A549 (cell line): ENCODE measurements at regions of chr10 and their contacts with region 1.

Region 1: DNA sequence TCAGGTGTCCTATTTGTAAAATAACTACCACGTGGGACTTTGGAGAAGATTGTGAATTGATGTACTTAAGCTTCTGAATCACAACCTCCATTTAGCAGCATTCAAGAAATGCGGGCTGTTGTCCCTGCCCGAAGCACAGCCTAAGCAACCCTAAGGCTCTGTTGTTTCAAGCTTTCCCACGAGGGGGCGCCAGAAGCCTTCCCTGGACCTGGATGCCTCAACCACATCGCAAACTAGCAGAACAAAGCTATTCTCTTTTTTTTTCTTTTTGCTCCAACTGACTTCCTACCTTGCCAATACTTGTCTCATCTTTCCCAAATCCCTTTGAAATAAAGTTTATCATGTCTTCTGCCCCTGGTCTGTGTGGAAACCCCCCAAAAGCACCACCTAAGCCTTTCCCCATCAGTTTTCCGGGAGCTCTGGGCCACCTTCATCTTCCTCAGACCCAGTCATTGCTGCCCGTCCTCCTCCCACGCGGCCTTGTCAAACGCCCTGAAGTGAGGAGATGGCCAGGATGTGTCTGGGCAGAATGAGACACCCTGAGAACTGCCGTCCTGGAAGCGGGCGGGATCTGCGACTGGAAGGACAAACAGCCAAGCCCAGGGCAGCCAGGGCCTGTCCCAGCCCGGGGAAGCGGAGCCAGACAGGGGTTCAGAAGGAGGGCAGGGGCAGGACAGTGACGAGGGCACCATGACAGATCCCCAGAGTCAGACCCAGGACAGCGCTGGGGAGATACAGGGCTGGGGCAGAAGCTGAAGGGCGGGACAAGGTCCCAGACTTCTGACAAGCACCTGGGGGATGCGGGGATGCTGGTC is 112.7 kb downstream of the SLIT1 start:
- DNase-seq: peak; percentile 69 to 72
- ATAC-seq: peak; percentile 70 to 90
- H3K4me3 ChIP-seq: no peak overlapping the region
- H3K27ac ChIP-seq: no peak overlapping the region
- H3K4me1 ChIP-seq: peaks cover 19% of the 10 kb centered on the region
- CTCF ChIP-seq: peak; percentile 91
- EP300 ChIP-seq: no peak
- POLR2A ChIP-seq: no peak
- RAD21 ChIP-seq: peak; percentile 92

Region 2: GRCh38 chr10:97025613-97026242 is 47.3 kb before region 1 on chr10:
- CTCF ChIA-PET with region 1: interaction called, 11 read pairs
- POLR2A ChIA-PET with region 1: no interaction called
- DNase-seq: peak; percentile 44 to 75
- ATAC-seq: peak in 1 of 2 experiments; percentile 74; a peak in 3 of 6 replicates
- H3K4me3 ChIP-seq: no peak overlapping the region
- H3K27ac ChIP-seq: peak overlapping the region in 1 of 2 experiments; percentile 82; a peak in 2 of 6 replicates
- H3K4me1 ChIP-seq: peaks cover 28% of the 10 kb centered on the region
- CTCF ChIP-seq: peak; percentile 62
- EP300 ChIP-seq: no peak
- POLR2A ChIP-seq: no peak
- RAD21 ChIP-seq: peak; percentile 19 to 42; a peak in 3 of 5 replicates

Region 3: GRCh38 chr10:97048649-97049427 is 24.2 kb before region 1 on chr10:
- CTCF ChIA-PET with region 1: interaction called, 12 read pairs
- POLR2A ChIA-PET with region 1: no interaction called
- DNase-seq: no peak
- ATAC-seq: no peak
- H3K4me3 ChIP-seq: no peak overlapping the region
- H3K27ac ChIP-seq: no peak overlapping the region
- H3K4me1 ChIP-seq: no peaks in the 10 kb centered on the region; the same call in 2 of the 3 replicates
- CTCF ChIP-seq: no peak
- EP300 ChIP-seq: no peak
- POLR2A ChIP-seq: no peak
- RAD21 ChIP-seq: no peak

Region 4: DNA sequence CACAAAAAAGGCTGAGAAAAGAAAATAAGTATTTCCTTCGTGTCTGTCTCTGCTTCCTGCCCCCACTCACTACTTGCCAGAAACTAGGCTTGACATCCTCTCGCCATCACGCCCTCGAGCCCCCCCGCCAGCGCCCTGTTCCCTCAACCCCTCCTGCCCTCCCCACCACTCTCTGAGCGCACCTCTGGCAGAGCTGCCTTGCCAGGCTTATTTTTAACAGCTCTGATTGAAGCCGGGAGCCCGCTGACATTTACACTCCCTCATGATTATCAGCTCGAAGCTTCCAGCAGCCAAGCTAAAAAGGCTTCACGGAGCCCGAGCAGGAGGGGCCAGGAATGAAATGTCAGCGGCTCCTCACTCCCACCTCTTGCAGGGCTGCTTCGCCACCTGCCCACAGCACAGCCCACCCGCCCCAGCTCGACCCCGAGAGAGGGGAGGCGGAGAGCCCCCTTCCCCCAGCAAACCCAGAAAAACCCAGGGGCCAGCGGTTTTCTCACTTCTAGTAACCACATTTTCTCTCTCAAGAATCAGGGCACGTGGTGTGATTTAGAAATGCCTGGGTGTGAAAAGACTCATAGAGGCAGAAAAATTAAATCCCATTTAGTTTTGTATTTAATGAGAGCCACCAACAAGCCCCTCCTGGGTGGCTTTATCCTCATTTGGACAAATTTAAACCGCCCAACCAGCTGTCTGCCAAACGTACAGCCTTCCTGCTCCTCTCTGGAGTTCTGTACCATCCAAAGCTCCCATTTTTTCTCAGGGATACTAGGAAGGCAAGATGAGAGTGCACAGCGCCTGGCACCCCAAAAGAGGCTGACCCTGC is 23.4 kb after region 1 on chr10:
- CTCF ChIA-PET with region 1: interaction called, 153 read pairs
- POLR2A ChIA-PET with region 1: no interaction called
- DNase-seq: no peak
- ATAC-seq: no peak
- H3K4me3 ChIP-seq: no peak overlapping the region
- H3K27ac ChIP-seq: no peak overlapping the region
- H3K4me1 ChIP-seq: no peaks in the 10 kb centered on the region
- CTCF ChIP-seq: no peak
- EP300 ChIP-seq: no peak
- POLR2A ChIP-seq: no peak
- RAD21 ChIP-seq: no peak

Region 5: DNA sequence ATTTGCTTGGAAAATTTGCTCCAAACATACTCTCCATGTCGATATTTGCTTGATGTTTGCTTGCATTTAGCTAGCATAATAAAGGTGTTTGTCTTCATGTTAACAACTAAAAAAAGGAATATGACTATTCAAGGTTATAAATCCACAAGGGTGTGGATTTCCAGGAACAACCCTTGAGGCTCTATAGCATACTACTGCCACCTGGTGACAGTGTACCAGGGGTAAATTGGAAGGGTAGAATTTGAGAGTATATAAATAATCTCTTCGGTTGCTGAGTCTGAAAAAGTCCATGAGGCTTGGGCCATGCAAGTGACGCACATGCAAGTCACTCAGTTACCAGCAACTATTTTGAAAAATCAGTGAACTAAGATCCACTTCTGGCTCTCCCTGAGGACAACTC is 44.3 kb after region 1 on chr10:
- CTCF ChIA-PET with region 1: interaction called, 80 read pairs
- POLR2A ChIA-PET with region 1: no interaction called
- DNase-seq: peak; percentile 24 to 42
- ATAC-seq: peak; percentile 55 to 83; a peak in 5 of 6 replicates
- H3K4me3 ChIP-seq: no peak overlapping the region
- H3K27ac ChIP-seq: no peak overlapping the region
- H3K4me1 ChIP-seq: no peaks in the 10 kb centered on the region
- CTCF ChIP-seq: peak; percentile 71
- EP300 ChIP-seq: no peak
- POLR2A ChIP-seq: no peak
- RAD21 ChIP-seq: peak; percentile 66 to 69

Region 6: GRCh38 chr10:97138174-97138573 is 65.1 kb after region 1 on chr10:
- CTCF ChIA-PET with region 1: interaction called, 12 read pairs
- POLR2A ChIA-PET with region 1: no interaction called
- DNase-seq: peak; percentile 35 to 58
- ATAC-seq: peak; percentile 78 to 91; a peak in 5 of 6 replicates
- H3K4me3 ChIP-seq: no peak overlapping the region
- H3K27ac ChIP-seq: no peak overlapping the region
- H3K4me1 ChIP-seq: no peaks in the 10 kb centered on the region
- CTCF ChIP-seq: peak; percentile 46
- EP300 ChIP-seq: no peak
- POLR2A ChIP-seq: no peak
- RAD21 ChIP-seq: peak; percentile 31 to 36; a peak in 3 of 5 replicates

Region 7: GRCh38 chr10:97222326-97222961 is 149.4 kb after region 1 on chr10:
- CTCF ChIA-PET with region 1: interaction called, 779 read pairs
- POLR2A ChIA-PET with region 1: no interaction called
- DNase-seq: no peak
- ATAC-seq: no peak
- H3K4me3 ChIP-seq: no peak overlapping the region
- H3K27ac ChIP-seq: no peak overlapping the region
- H3K4me1 ChIP-seq: no peaks in the 10 kb centered on the region
- CTCF ChIP-seq: no peak
- EP300 ChIP-seq: no peak
- POLR2A ChIP-seq: no peak
- RAD21 ChIP-seq: no peak